ENCODE measurements at regions of chr5 and their contacts with region 1.

Region 1: DNA sequence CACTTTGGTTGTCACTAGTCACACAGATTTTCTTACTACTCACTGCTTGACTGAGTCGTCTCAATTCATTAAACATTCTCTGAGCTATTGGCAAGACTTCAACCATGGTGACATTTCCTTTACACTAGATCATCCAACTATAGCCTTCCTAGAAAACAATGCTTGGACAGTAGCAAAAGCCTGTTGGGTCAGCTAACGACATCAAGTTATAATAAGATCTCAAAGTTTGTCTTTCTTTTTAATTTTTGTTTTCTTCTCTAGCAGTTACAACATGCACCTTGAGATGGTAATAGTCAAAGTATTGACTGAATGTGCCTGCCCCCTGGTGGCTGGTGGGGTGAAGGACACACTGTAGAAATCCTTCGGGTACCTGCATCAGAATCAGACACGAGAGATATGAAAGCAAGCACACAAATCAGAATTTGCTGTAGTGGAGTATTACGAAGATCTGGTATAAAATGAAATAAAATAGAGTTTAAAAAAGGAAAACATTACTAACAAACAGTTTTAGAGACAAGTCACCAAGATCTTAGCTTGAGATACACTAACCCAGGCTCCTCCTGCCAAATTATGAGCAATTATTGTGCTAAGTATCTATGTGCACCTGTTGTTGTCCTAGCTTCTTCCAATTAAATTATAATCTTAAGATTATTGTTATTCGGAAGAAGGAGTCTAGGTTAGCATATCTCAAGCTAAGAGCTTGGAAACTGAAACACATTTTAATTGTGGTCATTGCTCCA is 81.2 kb downstream of the ARL15 start:
- DNase-seq: peak; percentile 47
- H3K4me3 Mint-ChIP-seq: no peak overlapping the region
- H3K27ac Mint-ChIP-seq: no peak overlapping the region
- H3K4me1 Mint-ChIP-seq: no peaks in the 10 kb centered on the region
- H3K27me3 Mint-ChIP-seq: peaks cover 8% of the 10 kb centered on the region

Region 2: DNA sequence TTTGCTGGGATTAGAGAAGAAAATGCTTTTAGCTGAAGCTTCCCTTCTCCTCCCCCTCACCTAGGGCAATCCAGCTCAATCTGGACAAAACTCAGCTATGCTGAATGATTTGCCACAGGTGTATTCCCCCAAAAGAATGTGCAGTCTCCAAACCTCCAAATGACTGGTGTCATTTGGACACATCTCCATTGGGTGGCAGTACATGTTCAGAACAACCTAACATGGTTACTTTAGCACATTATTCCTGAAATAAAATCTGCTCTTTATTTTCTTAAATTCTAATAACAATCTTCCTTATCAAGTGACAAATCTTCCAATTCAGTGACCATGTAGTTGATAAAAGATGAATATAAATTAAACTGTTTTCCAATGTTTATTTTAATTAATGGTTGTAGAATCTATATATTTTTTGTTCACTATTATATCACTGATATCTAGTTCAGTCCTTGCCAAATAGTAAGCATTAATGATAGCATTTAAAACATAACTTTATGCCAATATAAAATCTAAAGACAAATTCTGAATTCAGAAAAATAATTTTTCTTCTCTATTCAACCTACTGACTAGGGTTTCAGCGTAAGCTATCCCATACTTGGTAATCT is 1058.4 kb before region 1 on chr5:
- intact Hi-C with region 1: loop called (anchors 1 kb)
- DNase-seq: no peak
- H3K4me3 Mint-ChIP-seq: no peak overlapping the region
- H3K27ac Mint-ChIP-seq: no peak overlapping the region
- H3K4me1 Mint-ChIP-seq: no peaks in the 10 kb centered on the region
- H3K27me3 Mint-ChIP-seq: peaks cover 17% of the 10 kb centered on the region

Region 3: DNA sequence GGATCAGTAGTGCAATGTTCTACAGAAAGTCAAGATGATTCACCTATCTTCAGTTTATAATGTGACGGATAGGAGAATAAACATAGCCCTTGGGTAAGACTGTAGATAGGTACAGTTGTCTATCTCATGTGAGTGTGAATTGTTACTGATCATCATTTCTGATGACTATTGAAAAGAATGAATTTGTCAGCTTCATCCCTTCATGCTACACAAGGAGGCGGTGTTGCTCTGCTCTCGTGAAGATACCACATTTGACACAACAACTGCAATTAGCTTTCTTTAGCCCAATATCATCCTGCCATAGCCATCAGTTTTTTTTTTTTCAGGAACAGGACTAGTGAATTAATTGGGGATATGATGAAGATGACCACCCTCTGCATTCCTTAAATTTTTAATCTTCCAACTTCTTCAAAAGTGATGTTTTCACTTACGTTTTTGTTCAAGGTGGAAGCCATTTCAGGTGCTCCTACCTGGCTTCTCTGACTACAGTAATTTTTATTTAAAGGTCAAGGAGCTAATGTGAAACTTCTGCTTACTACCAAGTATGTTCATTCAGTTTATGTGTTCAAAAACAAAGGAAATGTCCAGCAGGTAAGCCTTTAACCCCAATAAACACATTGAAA is 966.8 kb before region 1 on chr5:
- intact Hi-C with region 1: loop called (anchors 1 kb)
- DNase-seq: no peak
- H3K4me3 Mint-ChIP-seq: no peak overlapping the region
- H3K27ac Mint-ChIP-seq: no peak overlapping the region
- H3K4me1 Mint-ChIP-seq: no peaks in the 10 kb centered on the region
- H3K27me3 Mint-ChIP-seq: peaks cover 2% of the 10 kb centered on the region

Region 4: GRCh38 chr5:53425598-53426511 is 803.4 kb before region 1 on chr5:
- intact Hi-C with region 1: loop called (anchors 2 kb)
- DNase-seq: no peak
- H3K4me3 Mint-ChIP-seq: no peak overlapping the region
- H3K27ac Mint-ChIP-seq: no peak overlapping the region
- H3K4me1 Mint-ChIP-seq: no peaks in the 10 kb centered on the region
- H3K27me3 Mint-ChIP-seq: peaks cover 21% of the 10 kb centered on the region

Region 5: GRCh38 chr5:54135042-54135441 is 94.2 kb before region 1 on chr5:
- intact Hi-C with region 1: no loop called
- DNase-seq: no peak
- H3K4me3 Mint-ChIP-seq: no peak overlapping the region
- H3K27ac Mint-ChIP-seq: no peak overlapping the region
- H3K4me1 Mint-ChIP-seq: no peaks in the 10 kb centered on the region
- H3K27me3 Mint-ChIP-seq: peaks cover 5% of the 10 kb centered on the region

Region 6: GRCh38 chr5:54480296-54480695 is 251.1 kb after region 1 on chr5:
- intact Hi-C with region 1: no loop called
- DNase-seq: no peak
- H3K4me3 Mint-ChIP-seq: no peak overlapping the region
- H3K27ac Mint-ChIP-seq: no peak overlapping the region
- H3K4me1 Mint-ChIP-seq: no peaks in the 10 kb centered on the region
- H3K27me3 Mint-ChIP-seq: peaks cover 3% of the 10 kb centered on the region

Region 7: GRCh38 chr5:54541823-54542783 is 312.9 kb after region 1 on chr5:
- intact Hi-C with region 1: no loop called
- DNase-seq: no peak
- H3K4me3 Mint-ChIP-seq: no peak overlapping the region
- H3K27ac Mint-ChIP-seq: no peak overlapping the region
- H3K4me1 Mint-ChIP-seq: peaks cover 27% of the 10 kb centered on the region
- H3K27me3 Mint-ChIP-seq: no peaks in the 10 kb centered on the region

Measured in activated T-helper 1 cell treated with anti-CD3 and anti-CD28 coated beads, Interleukin-12 subunit alpha, Interleukin-12 subunit beta, Interleukin-2, Interleukin-4 antibody, amounts not matched to agents 30 ng/mL and 10 ng/mL and 1 ng/mL, durations not matched to agents 14 hours and 24 hours and 36 hours (primary cell).